Sciatic nerve (tissue), 2 donors: ENCODE measurements at regions of chr16 and their contacts with region 1.

Region 1: GRCh38 chr16:84186685-84187437 is at the start of gene TAF1C:
- DNase-seq: peak; percentile 95
- ATAC-seq: peak; percentile 98
- total RNA-seq, gene TAF1C: 43.2 TPM

Region 2: DNA sequence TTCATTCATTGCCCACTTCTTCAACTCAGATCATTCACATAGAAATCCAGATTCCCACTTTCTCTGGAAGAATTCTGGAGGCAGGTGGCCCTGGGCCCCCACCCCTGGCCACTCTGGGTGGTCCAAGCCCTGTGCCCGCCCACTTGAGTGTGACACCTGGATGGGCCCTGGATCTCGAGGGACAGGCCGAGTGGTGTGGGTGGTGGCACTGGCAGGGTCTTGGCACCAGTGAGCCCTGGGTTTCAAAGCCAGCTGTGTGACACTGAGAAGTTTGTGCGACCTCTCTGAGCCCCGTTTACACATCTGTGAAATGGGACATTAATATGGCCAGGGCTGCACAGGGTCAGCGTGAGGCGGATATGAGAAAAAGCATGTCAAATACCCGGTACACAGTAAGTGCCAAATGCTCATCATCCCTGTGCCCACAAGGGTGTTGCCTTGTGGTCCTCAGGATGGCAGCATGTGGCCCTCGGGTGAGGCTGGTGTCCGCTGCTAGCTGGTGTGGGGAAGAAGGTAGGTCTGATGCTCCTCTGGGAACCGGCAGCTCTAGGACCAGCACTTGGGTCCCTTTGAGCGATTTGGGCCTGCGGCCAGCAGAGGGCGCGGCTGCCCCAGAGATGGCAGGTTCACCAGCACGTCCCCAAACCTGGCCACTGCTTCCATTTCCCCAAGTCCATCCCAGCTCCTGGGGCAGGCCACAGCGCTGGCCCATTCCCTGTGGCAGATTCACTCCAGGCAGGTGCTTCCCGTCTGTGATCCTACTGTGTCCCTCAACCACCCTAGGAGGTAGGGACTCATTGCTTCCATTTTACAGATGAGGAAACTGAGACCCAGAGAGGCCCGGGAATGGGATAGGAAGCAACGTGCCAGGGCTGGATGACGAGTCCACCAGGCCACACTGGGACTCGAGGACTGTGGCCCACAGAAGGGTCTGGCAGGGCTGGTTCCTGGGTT is 230.2 kb before region 1 on chr16:
- intact Hi-C with region 1: loop called (anchors 5 kb)
- DNase-seq: peak; percentile 82
- ATAC-seq: no peak

Region 3: DNA sequence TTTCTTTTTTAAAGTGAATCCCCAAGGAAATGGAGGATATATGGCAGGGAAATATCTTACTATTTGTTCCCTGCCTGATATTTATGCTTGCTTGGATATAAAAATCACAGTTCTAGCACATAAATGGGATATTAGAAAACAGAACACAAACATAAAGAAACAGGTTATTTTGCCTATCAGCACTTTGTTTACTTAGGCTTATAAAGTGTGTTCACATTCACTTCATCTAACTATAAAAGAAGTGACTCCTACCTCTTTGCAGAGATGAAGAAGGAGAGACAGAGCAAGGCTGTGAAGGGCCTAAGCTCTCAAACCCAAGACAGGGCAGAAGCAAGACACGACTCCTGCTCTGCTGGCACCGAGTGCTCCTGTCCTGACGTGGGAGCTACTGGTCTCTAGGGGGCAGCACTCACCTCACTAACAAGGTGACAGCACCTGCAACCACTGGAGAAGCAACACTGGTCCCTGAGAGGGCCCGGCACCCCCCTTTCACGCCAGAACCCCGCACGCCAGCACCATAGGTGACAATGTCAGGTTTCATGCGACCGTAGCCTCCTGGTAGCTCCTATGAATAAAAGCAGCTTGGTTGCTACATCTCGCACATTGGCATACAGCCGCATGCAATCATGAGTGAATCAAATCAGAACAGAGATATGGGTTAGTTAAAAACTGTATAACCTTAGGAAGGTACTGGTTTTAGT is 102.1 kb before region 1 on chr16:
- intact Hi-C with region 1: loop called (anchors 10 kb)
- DNase-seq: no peak
- ATAC-seq: peak; percentile 47

Region 4: GRCh38 chr16:84380405-84380804 is 193.5 kb after region 1 on chr16:
- intact Hi-C with region 1: no loop called
- DNase-seq: no peak
- ATAC-seq: peak; percentile 76